CD4-positive, alpha-beta memory T cell (primary cell): ENCODE measurements at regions of chr5 and their contacts with region 1.

Region 1: DNA sequence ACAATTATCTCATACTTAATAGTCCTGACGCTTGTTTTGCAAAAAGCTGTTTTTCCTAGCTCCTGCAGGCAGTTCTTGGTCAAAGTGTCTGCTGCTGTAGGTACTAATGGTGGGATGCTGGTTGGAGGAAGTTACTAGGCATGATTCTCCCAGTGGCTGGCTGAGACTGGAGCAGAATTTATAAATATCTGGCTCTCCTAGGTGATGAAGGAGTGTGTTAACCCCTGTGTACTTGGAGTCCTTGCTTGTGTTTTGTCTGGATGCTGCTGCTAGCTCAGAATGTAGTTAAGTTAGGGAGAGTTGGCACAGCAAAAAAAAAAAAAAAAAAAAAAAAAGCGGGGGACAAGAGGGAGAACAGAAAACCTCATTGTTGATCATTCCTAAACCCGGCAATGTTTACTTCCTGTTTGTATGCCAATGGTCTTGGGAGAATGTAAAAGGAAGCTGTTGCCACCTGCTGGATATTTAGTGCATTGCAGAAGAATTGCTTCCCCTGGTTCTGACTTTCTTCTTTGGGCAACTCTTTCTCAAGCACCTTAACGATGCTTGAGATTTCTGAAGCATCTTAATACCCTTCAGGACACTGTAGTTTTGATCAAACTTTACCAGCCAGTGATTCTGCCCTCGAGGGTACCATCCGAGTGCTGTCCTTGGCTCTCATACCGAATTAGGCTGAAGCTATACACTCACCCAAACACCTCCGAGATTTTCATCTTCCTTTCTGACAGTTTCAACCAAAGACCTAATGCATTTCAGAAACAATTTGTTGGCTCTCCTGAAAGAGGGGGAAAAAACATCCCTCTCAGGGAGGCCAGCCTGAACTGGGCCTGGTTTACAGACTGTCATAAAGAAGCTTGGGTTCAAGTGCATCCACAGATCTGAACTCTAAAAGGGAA is 71.7 kb upstream of the WWC1 start:
- DNase-seq: peak in 4 of 5 donors; percentile 36 to 46 (median 41)
- H3K4me3 ChIP-seq: no peak overlapping the region
- H3K4me3 Mint-ChIP-seq: peak overlapping the region in 5 of 8 donors; percentile 27 to 49 (median 42)
- H3K27ac ChIP-seq: no peak overlapping the region
- H3K27ac Mint-ChIP-seq: no peak overlapping the region
- H3K4me1 ChIP-seq: no peaks in the 10 kb centered on the region
- H3K4me1 Mint-ChIP-seq: peaks cover 0 to 5% (median under 1%) of the 10 kb centered on the region in 4 donors
- H3K27me3 ChIP-seq: no peaks in the 10 kb centered on the region
- H3K27me3 Mint-ChIP-seq: peaks cover 2 to 3% of the 10 kb centered on the region in 2 donors

Region 2: GRCh38 chr5:167723254-167723871 is 496.4 kb before region 1 on chr5:
- CTCF ChIA-PET with region 1: interaction called, 47 read pairs
- POLR2A ChIA-PET with region 1: no interaction called
- intact Hi-C with region 1: no loop called
- DNase-seq: peak; percentile 34 to 51 (median 46)
- H3K4me3 ChIP-seq: no peak overlapping the region
- H3K4me3 Mint-ChIP-seq: peak overlapping the region in 1 of 8 donors; percentile 44
- H3K27ac ChIP-seq: no peak overlapping the region
- H3K27ac Mint-ChIP-seq: no peak overlapping the region
- H3K4me1 ChIP-seq: no peaks in the 10 kb centered on the region
- H3K4me1 Mint-ChIP-seq: peaks cover 0 to 7% (median 5%) of the 10 kb centered on the region in 4 donors
- H3K27me3 ChIP-seq: no peaks in the 10 kb centered on the region
- H3K27me3 Mint-ChIP-seq: peaks cover 4 to 5% of the 10 kb centered on the region in 2 donors

Region 3: GRCh38 chr5:168006456-168007130 is 213.2 kb before region 1 on chr5:
- CTCF ChIA-PET with region 1: no interaction called
- POLR2A ChIA-PET with region 1: no interaction called
- intact Hi-C with region 1: no loop called
- DNase-seq: no peak
- H3K4me3 ChIP-seq: no peak overlapping the region
- H3K4me3 Mint-ChIP-seq: no peak overlapping the region
- H3K27ac ChIP-seq: no peak overlapping the region
- H3K27ac Mint-ChIP-seq: no peak overlapping the region
- H3K4me1 ChIP-seq: no peaks in the 10 kb centered on the region
- H3K4me1 Mint-ChIP-seq: no peaks in the 10 kb centered on the region
- H3K27me3 ChIP-seq: no peaks in the 10 kb centered on the region
- H3K27me3 Mint-ChIP-seq: no peaks in the 10 kb centered on the region

Region 4: GRCh38 chr5:168114444-168115017 is 105.2 kb before region 1 on chr5:
- CTCF ChIA-PET with region 1: no interaction called
- POLR2A ChIA-PET with region 1: no interaction called
- intact Hi-C with region 1: loop called (anchors 1 kb)
- DNase-seq: peak in 3 of 5 donors; percentile 4 to 17 (median 6)
- H3K4me3 ChIP-seq: no peak overlapping the region
- H3K4me3 Mint-ChIP-seq: no peak overlapping the region
- H3K27ac ChIP-seq: no peak overlapping the region
- H3K27ac Mint-ChIP-seq: no peak overlapping the region
- H3K4me1 ChIP-seq: no peaks in the 10 kb centered on the region
- H3K4me1 Mint-ChIP-seq: peaks cover 0 to 9% (median 3%) of the 10 kb centered on the region in 4 donors
- H3K27me3 ChIP-seq: no peaks in the 10 kb centered on the region
- H3K27me3 Mint-ChIP-seq: peaks cover 6 to 7% of the 10 kb centered on the region in 2 donors

Region 5: DNA sequence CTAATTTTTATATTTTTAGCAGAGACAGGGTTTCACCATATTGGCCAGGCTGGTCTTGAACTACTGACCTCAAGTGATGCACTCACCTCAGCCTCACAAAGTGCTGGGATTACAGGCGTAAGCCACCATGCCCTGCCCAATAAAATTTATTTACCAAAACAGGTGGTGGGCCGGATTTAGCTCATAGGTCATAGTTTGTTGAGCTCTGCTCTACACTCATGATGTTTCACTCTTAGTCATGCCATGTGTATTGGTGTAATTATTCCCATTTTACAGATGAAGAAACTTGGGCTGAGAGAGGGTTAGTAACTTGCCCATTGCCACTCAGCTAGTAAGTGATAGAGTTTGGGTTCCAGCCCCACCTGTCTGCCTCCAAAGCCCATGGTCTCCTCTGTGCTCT is 21.4 kb before region 1 on chr5:
- CTCF ChIA-PET with region 1: interaction called, 10 read pairs
- POLR2A ChIA-PET with region 1: no interaction called
- intact Hi-C with region 1: no loop called
- DNase-seq: no peak
- H3K4me3 ChIP-seq: no peak overlapping the region
- H3K4me3 Mint-ChIP-seq: no peak overlapping the region
- H3K27ac ChIP-seq: no peak overlapping the region
- H3K27ac Mint-ChIP-seq: no peak overlapping the region
- H3K4me1 ChIP-seq: no peaks in the 10 kb centered on the region
- H3K4me1 Mint-ChIP-seq: peaks cover 0 to 2% (median 0%) of the 10 kb centered on the region in 4 donors
- H3K27me3 ChIP-seq: no peaks in the 10 kb centered on the region
- H3K27me3 Mint-ChIP-seq: peaks cover 6% of the 10 kb centered on the region in 2 donors

Region 6: GRCh38 chr5:168209244-168209995 is 10.3 kb before region 1 on chr5:
- CTCF ChIA-PET with region 1: interaction called, 15 read pairs
- POLR2A ChIA-PET with region 1: no interaction called
- intact Hi-C with region 1: no loop called
- DNase-seq: no peak
- H3K4me3 ChIP-seq: no peak overlapping the region
- H3K4me3 Mint-ChIP-seq: no peak overlapping the region
- H3K27ac ChIP-seq: no peak overlapping the region
- H3K27ac Mint-ChIP-seq: no peak overlapping the region
- H3K4me1 ChIP-seq: no peaks in the 10 kb centered on the region
- H3K4me1 Mint-ChIP-seq: no peaks in the 10 kb centered on the region
- H3K27me3 ChIP-seq: no peaks in the 10 kb centered on the region
- H3K27me3 Mint-ChIP-seq: peaks cover 2 to 4% of the 10 kb centered on the region in 2 donors

Region 7: GRCh38 chr5:168234133-168234532 is 14.4 kb after region 1 on chr5:
- CTCF ChIA-PET with region 1: interaction called, 14 read pairs
- POLR2A ChIA-PET with region 1: interaction called, 3 read pairs
- intact Hi-C with region 1: no loop called
- DNase-seq: no peak
- H3K4me3 ChIP-seq: no peak overlapping the region
- H3K4me3 Mint-ChIP-seq: no peak overlapping the region
- H3K27ac ChIP-seq: no peak overlapping the region
- H3K27ac Mint-ChIP-seq: no peak overlapping the region
- H3K4me1 ChIP-seq: no peaks in the 10 kb centered on the region
- H3K4me1 Mint-ChIP-seq: peaks cover 0 to 2% (median 0%) of the 10 kb centered on the region in 4 donors
- H3K27me3 ChIP-seq: no peaks in the 10 kb centered on the region
- H3K27me3 Mint-ChIP-seq: peaks cover 3 to 6% of the 10 kb centered on the region in 2 donors

Region 8: GRCh38 chr5:168244838-168245559 is 25.2 kb after region 1 on chr5:
- CTCF ChIA-PET with region 1: interaction called, 12 read pairs
- POLR2A ChIA-PET with region 1: no interaction called
- intact Hi-C with region 1: no loop called
- DNase-seq: no peak
- H3K4me3 ChIP-seq: no peak overlapping the region
- H3K4me3 Mint-ChIP-seq: no peak overlapping the region
- H3K27ac ChIP-seq: no peak overlapping the region
- H3K27ac Mint-ChIP-seq: no peak overlapping the region
- H3K4me1 ChIP-seq: no peaks in the 10 kb centered on the region
- H3K4me1 Mint-ChIP-seq: no peaks in the 10 kb centered on the region
- H3K27me3 ChIP-seq: no peaks in the 10 kb centered on the region
- H3K27me3 Mint-ChIP-seq: peaks cover 0 to 5% of the 10 kb centered on the region in 2 donors

Region 9: GRCh38 chr5:170070556-170071412 is 1851.0 kb after region 1 on chr5:
- CTCF ChIA-PET with region 1: no interaction called
- POLR2A ChIA-PET with region 1: no interaction called
- intact Hi-C with region 1: no loop called
- DNase-seq: no peak
- H3K4me3 ChIP-seq: no peak overlapping the region
- H3K4me3 Mint-ChIP-seq: no peak overlapping the region
- H3K27ac ChIP-seq: no peak overlapping the region
- H3K27ac Mint-ChIP-seq: peak overlapping the region in 1 of 7 donors; percentile 23
- H3K4me1 ChIP-seq: no peaks in the 10 kb centered on the region
- H3K4me1 Mint-ChIP-seq: no peaks in the 10 kb centered on the region
- H3K27me3 ChIP-seq: no peaks in the 10 kb centered on the region
- H3K27me3 Mint-ChIP-seq: no peaks in the 10 kb centered on the region